Mammary epithelial cell (primary cell): ENCODE measurements at regions of chr13 and their contacts with region 1.

Region 1: DNA sequence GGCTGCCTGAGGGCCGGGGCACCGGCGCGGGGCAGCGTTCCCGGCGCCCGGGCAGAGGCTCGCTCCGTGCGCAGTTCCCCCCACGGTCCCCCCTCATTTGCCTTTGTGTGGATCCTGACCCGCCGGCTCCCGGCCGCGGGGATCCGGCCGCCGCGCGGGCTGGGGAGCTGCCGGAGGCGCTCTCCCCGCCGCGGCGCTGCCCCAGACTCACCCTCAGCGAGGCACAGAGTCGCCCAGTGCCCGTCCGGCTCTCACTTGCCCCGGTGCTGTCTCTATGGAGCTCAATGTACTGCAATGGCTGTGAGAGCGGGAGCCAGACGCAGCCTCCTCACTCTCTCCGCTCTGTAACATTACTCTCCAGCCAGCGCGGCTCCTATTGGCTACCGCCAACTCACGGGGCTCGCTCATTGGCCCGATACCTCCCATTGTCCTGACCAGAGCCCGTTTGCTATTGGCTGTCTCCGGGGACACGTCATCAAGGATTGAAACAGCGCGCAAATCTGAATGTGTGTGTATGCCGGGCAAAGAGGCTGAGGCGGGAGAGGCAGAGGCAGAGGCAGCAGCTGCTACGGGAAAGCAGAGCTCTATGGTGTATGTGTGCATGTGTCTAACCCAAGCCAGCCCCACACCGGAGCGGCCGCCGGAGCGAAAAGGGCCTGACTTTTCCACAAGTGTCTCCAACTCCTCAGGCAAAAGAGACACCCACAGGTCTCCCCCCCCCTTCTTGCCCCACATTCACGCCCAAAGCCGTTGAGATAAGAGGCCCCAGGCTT is at the start of gene HMGB1:
- DNase-seq: peak; percentile 99
- H3K4me3 ChIP-seq: peak within 1 kb of the TSS; percentile 54 to 76 (median 58)
- H3K27ac ChIP-seq: peak within 1 kb of the TSS; percentile 89
- H3K4me1 ChIP-seq: peaks cover 23% of the 10 kb centered on the region
- H3K27me3 ChIP-seq: no peaks in the 10 kb centered on the region
- CTCF ChIP-seq: no peak
- total RNA-seq, gene HMGB1: 78.0 to 273 TPM

Region 2: DNA sequence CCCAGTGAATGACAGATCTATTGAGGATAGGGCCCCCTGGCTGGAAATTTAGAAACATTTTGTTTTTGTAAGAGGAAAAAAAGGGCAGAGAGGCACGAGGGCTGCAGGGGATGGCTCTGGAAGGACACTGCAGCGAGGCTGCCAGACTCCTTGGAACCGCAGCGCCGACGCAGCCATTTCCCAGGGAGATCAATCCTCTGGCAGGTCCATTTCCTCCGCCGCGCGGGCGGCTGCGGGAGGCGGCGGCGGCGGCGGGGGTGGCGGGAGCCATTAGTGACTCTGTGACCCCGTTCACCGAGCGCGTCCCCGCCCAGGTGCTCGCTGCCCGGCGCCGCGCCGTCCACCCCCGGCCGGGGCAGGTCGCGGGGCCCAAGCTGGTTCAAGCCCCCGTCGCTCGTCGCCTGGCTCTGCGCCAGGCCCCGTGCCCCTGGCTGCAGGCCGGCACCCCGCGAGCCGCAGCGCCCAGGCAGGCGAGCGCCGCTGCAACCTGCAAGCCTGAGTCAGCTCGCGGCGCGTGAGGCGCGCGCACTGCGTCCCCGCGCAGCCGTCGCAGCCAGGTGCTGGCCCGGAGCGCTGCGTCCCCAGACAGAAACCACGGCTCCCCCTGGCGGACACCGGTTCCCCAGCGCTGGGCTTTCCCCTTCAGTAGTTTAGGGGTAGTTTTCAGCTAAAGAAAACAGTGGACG is 351.1 kb before region 1 on chr13:
- CTCF ChIA-PET with region 1: no interaction called
- dilution Hi-C with region 1: no loop called
- in situ Hi-C with region 1: no loop called
- intact Hi-C with region 1: loop called (anchors 5 kb)
- DNase-seq: peak; percentile 82
- H3K4me3 ChIP-seq: peak overlapping the region; percentile 23 to 66 (median 49)
- H3K27ac ChIP-seq: peak overlapping the region; percentile 49
- H3K4me1 ChIP-seq: peaks cover 19% of the 10 kb centered on the region
- H3K27me3 ChIP-seq: no peaks in the 10 kb centered on the region
- CTCF ChIP-seq: peak; percentile 79 to 93

Region 3: GRCh38 chr13:30341815-30342570 is 123.8 kb before region 1 on chr13:
- CTCF ChIA-PET with region 1: no interaction called
- dilution Hi-C with region 1: no loop called
- in situ Hi-C with region 1: no loop called
- intact Hi-C with region 1: loop called (anchors 5 kb)
- DNase-seq: peak; percentile 89
- H3K4me3 ChIP-seq: no peak overlapping the region
- H3K27ac ChIP-seq: peak overlapping the region; percentile 61
- H3K4me1 ChIP-seq: peaks cover 48% of the 10 kb centered on the region
- H3K27me3 ChIP-seq: no peaks in the 10 kb centered on the region
- CTCF ChIP-seq: no peak

Region 4: GRCh38 chr13:30520571-30520970 is 54.8 kb after region 1 on chr13:
- CTCF ChIA-PET with region 1: no interaction called
- dilution Hi-C with region 1: no loop called
- in situ Hi-C with region 1: no loop called
- intact Hi-C with region 1: no loop called
- DNase-seq: peak; percentile 44
- H3K4me3 ChIP-seq: no peak overlapping the region
- H3K27ac ChIP-seq: no peak overlapping the region
- H3K4me1 ChIP-seq: no peaks in the 10 kb centered on the region
- H3K27me3 ChIP-seq: no peaks in the 10 kb centered on the region
- CTCF ChIP-seq: no peak

Region 5: DNA sequence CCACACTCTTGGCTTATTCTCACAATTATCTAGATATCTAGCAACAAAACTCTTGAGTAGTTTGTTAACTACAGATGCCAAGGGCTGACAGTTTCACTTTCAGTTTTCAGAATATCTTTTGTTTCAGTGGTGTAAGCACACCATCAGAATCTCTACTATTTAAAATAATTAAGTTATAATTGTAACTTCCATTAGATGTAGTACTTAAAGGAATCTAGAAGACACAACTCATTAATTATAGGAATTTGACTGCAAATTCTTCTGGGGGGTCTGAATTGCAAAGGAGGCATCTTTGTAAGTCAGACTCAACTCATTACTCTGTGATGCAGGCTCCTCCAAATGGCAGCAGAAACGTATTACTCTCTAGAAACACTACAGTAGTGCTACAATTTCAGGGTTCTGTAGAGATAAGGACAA is 107.1 kb after region 1 on chr13:
- CTCF ChIA-PET with region 1: no interaction called
- dilution Hi-C with region 1: no loop called
- in situ Hi-C with region 1: no loop called
- intact Hi-C with region 1: loop called (anchors 2 kb)
- DNase-seq: peak; percentile 37
- H3K4me3 ChIP-seq: peak overlapping the region; percentile 31 to 53 (median 46)
- H3K27ac ChIP-seq: peak overlapping the region; percentile 71
- H3K4me1 ChIP-seq: peaks cover 35% of the 10 kb centered on the region
- H3K27me3 ChIP-seq: no peaks in the 10 kb centered on the region
- CTCF ChIP-seq: peak in 1 of 2 donors; percentile 33

Region 6: DNA sequence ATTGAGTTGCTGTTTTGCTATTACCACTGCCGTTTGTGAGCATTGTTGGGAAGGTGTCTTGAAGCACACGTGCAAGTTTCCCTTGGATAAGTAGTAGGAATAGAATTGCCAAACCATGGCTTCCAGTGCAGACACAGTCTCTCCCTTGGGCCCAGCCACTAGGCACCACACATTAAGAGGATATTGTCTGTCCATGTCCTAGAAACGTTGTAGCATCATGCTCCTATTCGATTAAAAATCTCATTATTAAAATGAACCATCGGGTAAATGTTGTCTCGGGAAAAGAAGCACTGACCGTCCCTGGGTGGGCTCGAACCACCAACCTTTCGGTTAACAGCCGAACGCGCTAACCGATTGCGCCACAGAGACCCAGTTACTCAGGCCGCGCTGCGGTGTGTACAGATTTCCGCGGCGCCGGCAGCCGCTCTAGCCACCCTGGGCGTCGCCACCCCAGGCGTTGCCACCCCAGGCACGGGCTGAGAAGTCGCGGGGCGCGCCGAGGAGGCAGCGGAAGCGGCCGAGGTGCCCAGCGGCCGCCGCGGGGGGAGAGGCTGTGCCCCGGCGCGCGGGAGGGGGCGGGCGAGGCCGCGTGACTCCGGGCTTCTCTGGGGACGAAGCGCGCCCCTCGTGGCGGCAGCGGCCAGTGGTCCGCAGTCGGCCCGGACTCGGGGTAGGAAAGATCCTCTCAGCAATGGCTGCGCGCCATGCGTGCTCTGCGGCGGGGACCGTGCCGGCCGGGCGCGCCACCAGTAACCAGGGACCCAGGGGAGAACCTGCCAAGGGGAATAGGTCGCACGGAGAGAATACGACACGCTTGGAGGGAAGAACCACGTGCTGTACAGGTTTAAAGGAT is 208.1 kb after region 1 on chr13:
- CTCF ChIA-PET with region 1: no interaction called
- dilution Hi-C with region 1: no loop called
- in situ Hi-C with region 1: no loop called
- intact Hi-C with region 1: loop called (anchors 10 kb)
- DNase-seq: peak; percentile 81
- H3K4me3 ChIP-seq: peak overlapping the region; percentile 23 to 56 (median 52)
- H3K27ac ChIP-seq: no peak overlapping the region
- H3K4me1 ChIP-seq: peaks cover 9% of the 10 kb centered on the region
- H3K27me3 ChIP-seq: no peaks in the 10 kb centered on the region
- CTCF ChIP-seq: peak; percentile 37 to 49